ENCODE measurements at regions of chr2 and their contacts with region 1.

Region 1: GRCh38 chr2:50492477-50492851 is 539.5 kb downstream of the NRXN1 start:
- DNase-seq: peak in 1 of 3 donors; percentile 38
- ATAC-seq: peak; percentile 78
- H3K4me3 ChIP-seq: no peak overlapping the region
- H3K4me1 ChIP-seq: peaks cover 4% of the 10 kb centered on the region
- CTCF ChIP-seq: peak; percentile 24

Region 2: GRCh38 chr2:48946449-48947048 is 1545.9 kb before region 1 on chr2:
- intact Hi-C with region 1: loop called in 1 of 2 experiments (anchors 10 kb)
- DNase-seq: peak in 1 of 3 donors; percentile 21
- ATAC-seq: peak; percentile 91
- H3K4me3 ChIP-seq: no peak overlapping the region
- H3K4me1 ChIP-seq: no peaks in the 10 kb centered on the region
- CTCF ChIP-seq: peak; percentile 79

Region 3: DNA sequence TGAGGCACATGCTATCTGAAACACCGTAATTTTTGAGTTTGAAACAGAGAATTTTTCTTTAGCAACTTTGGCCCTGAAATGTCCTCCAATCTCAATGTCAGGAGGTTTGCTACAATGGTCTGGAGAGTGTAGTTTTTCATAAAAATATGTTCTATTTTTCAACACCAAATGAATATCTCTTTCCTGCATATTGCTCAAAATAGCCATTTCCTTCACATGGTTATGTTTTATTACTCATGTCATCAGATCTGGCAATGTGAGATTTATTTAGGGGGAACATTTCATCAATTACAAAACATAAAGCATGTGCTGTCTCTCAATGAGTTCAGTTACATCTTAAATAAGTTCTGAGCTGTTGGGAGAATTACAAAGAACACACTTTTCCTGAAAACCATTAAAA is 466.2 kb before region 1 on chr2:
- intact Hi-C with region 1: no loop called
- DNase-seq: no peak
- ATAC-seq: no peak
- H3K4me3 ChIP-seq: no peak overlapping the region
- H3K4me1 ChIP-seq: no peaks in the 10 kb centered on the region
- CTCF ChIP-seq: no peak

Region 4: DNA sequence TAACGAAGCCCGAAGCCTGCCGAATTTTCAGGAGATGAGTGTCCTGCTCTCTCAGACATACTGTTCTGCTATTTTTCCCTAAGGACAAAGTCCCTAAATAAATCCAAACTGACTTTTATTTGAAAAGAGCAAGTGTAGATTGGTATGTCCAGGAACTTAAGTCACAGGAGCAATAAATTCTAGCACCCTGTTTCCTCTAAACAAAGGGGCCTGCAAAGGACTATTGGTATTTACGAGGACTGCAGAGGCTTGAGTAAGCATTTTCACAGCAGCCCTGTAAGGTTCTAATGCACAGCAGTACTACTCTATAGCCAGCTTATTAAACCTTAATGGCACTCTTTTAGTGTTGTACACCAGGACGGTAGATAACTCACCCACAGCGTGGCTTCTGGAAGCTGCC is 200.9 kb before region 1 on chr2:
- intact Hi-C with region 1: no loop called
- DNase-seq: no peak
- ATAC-seq: no peak
- H3K4me3 ChIP-seq: no peak overlapping the region
- H3K4me1 ChIP-seq: no peaks in the 10 kb centered on the region
- CTCF ChIP-seq: no peak

Measured in mucosa of descending colon (tissue), 3 donors.